PC-9 (cell line): ENCODE measurements at regions of chr11 and their contacts with region 1.

Region 1: GRCh38 chr11:94504689-94505293 is 7.5 kb upstream of the C11orf97 start:
- DNase-seq: peak in 1 of 2 experiments; percentile 69
- H3K4me3 ChIP-seq: no peak overlapping the region
- H3K27ac ChIP-seq: no peak overlapping the region
- H3K4me1 ChIP-seq: no peaks in the 10 kb centered on the region; the same call in 1 of the 2 replicates
- H3K27me3 ChIP-seq: no peaks in the 10 kb centered on the region
- CTCF ChIP-seq: peak; percentile 91

Region 2: GRCh38 chr11:93234602-93235207 is 1270.1 kb before region 1 on chr11:
- CTCF ChIA-PET with region 1: no interaction called
- POLR2A ChIA-PET with region 1: no interaction called
- intact Hi-C with region 1: loop called (anchors 5 kb)
- DNase-seq: peak; percentile 70 to 74
- H3K4me3 ChIP-seq: no peak overlapping the region
- H3K27ac ChIP-seq: no peak overlapping the region
- H3K4me1 ChIP-seq: no peaks in the 10 kb centered on the region
- H3K27me3 ChIP-seq: no peaks in the 10 kb centered on the region
- CTCF ChIP-seq: peak; percentile 96

Region 3: GRCh38 chr11:93895106-93895862 is 609.5 kb before region 1 on chr11:
- CTCF ChIA-PET with region 1: interaction called, 10 read pairs
- POLR2A ChIA-PET with region 1: no interaction called
- intact Hi-C with region 1: loop called (anchors 2 kb)
- DNase-seq: peak; percentile 18 to 69
- H3K4me3 ChIP-seq: no peak overlapping the region
- H3K27ac ChIP-seq: no peak overlapping the region
- H3K4me1 ChIP-seq: no peaks in the 10 kb centered on the region
- H3K27me3 ChIP-seq: no peaks in the 10 kb centered on the region
- CTCF ChIP-seq: peak; percentile 94

Region 4: DNA sequence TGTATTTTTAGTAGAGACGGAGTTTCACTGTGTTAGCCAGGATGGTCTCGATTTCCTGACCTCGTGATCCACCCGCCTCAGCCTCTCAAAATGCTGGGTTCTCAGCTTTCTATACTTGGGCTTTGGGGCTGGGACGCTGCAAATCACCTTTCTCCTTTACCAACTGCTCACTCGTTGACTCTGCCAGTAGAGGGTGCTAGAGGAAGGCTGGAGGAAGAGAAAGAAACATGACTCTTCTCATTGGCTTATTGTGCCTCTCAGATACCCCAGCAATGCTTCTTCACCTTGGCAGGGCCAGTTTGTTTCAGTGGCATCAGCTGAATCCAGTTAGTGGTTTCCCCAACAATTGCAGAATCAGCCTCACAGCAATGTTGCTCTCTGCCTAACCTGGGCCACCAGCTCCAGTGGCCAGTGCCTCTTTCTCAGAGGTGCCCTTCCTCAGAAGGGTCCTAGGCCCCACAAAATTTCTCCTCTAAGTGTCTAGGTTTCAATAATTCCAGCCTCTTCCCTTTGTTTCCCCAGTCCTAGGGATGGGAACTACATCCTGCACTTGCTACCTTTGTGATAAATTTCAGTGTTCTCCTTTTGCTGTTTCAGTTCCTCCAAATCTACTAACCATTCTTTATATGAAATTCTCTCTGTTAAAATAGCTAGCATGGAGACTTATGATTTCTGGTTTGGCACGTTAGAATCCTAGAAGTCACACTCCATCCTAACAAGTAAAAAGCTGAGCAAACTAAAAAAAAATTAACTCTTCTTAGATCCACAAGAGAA is 582.9 kb before region 1 on chr11:
- CTCF ChIA-PET with region 1: no interaction called
- POLR2A ChIA-PET with region 1: no interaction called
- intact Hi-C with region 1: loop called (anchors 2 kb)
- DNase-seq: peak; percentile 32 to 63
- H3K4me3 ChIP-seq: no peak overlapping the region
- H3K27ac ChIP-seq: no peak overlapping the region
- H3K4me1 ChIP-seq: no peaks in the 10 kb centered on the region
- H3K27me3 ChIP-seq: no peaks in the 10 kb centered on the region
- CTCF ChIP-seq: peak; percentile 94

Region 5: DNA sequence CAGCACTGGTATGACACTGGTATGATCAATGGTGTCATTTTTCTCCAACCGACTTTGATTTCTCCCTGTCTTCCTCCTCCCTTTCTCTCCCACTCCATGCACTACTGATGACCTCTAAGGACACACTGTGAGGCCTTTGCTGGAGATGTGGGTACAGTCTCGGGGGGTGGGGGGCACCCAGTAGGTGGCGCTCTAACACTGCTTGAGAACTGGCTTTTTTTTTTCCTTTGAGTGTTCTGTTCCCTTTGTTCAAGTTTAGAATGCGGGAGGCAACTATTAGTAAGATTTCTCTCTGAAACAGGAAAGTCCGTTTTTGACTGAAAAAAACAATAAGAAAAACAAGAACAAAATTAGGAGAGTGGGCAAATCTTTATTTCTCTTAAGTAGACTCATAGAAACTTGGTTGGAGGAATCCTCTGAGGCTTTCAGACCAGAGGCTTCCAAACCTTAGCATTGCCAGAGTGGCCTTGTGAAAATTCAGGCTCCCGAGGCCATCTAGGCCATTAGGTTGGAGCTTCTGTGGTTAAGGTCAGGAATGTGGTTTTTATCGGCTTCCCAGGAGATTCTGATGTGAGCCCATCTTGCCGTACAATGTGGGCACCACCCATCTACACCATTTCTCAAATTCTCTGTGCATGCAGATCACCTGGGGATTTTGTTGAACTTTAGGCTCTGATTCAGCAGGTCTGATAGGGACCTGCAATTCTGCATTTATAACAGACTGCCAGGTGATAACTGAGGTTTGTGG is 332.9 kb before region 1 on chr11:
- CTCF ChIA-PET with region 1: interaction called, 5 read pairs
- POLR2A ChIA-PET with region 1: no interaction called
- intact Hi-C with region 1: loop called (anchors 1 kb)
- DNase-seq: peak in 1 of 2 experiments; percentile 35
- H3K4me3 ChIP-seq: no peak overlapping the region
- H3K27ac ChIP-seq: no peak overlapping the region
- H3K4me1 ChIP-seq: no peaks in the 10 kb centered on the region
- H3K27me3 ChIP-seq: no peaks in the 10 kb centered on the region
- CTCF ChIP-seq: peak; percentile 93

Region 6: GRCh38 chr11:94183886-94184264 is 320.9 kb before region 1 on chr11:
- CTCF ChIA-PET with region 1: no interaction called
- POLR2A ChIA-PET with region 1: no interaction called
- intact Hi-C with region 1: loop called (anchors 5 kb)
- DNase-seq: peak; percentile 42 to 58
- H3K4me3 ChIP-seq: no peak overlapping the region
- H3K27ac ChIP-seq: no peak overlapping the region
- H3K4me1 ChIP-seq: no peaks in the 10 kb centered on the region
- H3K27me3 ChIP-seq: no peaks in the 10 kb centered on the region
- CTCF ChIP-seq: peak; percentile 92